GM12878 (cell line): ENCODE measurements at regions of chr5 and their contacts with region 1.

Region 1: GRCh38 chr5:7251132-7251531 is 144.8 kb upstream of the ADCY2 start:
- DNase-seq: no peak
- ATAC-seq: no peak
- H3K4me3 ChIP-seq: no peak overlapping the region
- H3K27ac ChIP-seq: no peak overlapping the region
- H3K4me1 ChIP-seq: no peaks in the 10 kb centered on the region
- H3K27me3 ChIP-seq: no peaks in the 10 kb centered on the region
- CTCF ChIP-seq: no peak
- EP300 ChIP-seq: no peak
- POLR2A ChIP-seq: no peak
- RAD21 ChIP-seq: no peak

Region 2: GRCh38 chr5:7117961-7118360 is 133.2 kb before region 1 on chr5:
- CTCF ChIA-PET with region 1: no interaction called
- POLR2A ChIA-PET with region 1: no interaction called
- RAD21 ChIA-PET with region 1: no interaction called
- SMC1A ChIA-PET with region 1: no interaction called
- in situ Hi-C with region 1: no loop called
- intact Hi-C with region 1: no loop called
- DNase-seq: no peak
- ATAC-seq: no peak
- H3K4me3 ChIP-seq: no peak overlapping the region
- H3K27ac ChIP-seq: no peak overlapping the region
- H3K4me1 ChIP-seq: no peaks in the 10 kb centered on the region
- H3K27me3 ChIP-seq: no peaks in the 10 kb centered on the region
- CTCF ChIP-seq: no peak
- EP300 ChIP-seq: no peak
- POLR2A ChIP-seq: no peak
- RAD21 ChIP-seq: no peak

Region 3: GRCh38 chr5:7157083-7157482 is 94.0 kb before region 1 on chr5:
- CTCF ChIA-PET with region 1: no interaction called
- POLR2A ChIA-PET with region 1: no interaction called
- RAD21 ChIA-PET with region 1: no interaction called
- SMC1A ChIA-PET with region 1: no interaction called
- in situ Hi-C with region 1: no loop called
- intact Hi-C with region 1: no loop called
- DNase-seq: no peak
- ATAC-seq: no peak
- H3K4me3 ChIP-seq: no peak overlapping the region
- H3K27ac ChIP-seq: no peak overlapping the region
- H3K4me1 ChIP-seq: no peaks in the 10 kb centered on the region
- H3K27me3 ChIP-seq: no peaks in the 10 kb centered on the region
- CTCF ChIP-seq: no peak
- EP300 ChIP-seq: no peak
- POLR2A ChIP-seq: no peak
- RAD21 ChIP-seq: no peak

Region 4: DNA sequence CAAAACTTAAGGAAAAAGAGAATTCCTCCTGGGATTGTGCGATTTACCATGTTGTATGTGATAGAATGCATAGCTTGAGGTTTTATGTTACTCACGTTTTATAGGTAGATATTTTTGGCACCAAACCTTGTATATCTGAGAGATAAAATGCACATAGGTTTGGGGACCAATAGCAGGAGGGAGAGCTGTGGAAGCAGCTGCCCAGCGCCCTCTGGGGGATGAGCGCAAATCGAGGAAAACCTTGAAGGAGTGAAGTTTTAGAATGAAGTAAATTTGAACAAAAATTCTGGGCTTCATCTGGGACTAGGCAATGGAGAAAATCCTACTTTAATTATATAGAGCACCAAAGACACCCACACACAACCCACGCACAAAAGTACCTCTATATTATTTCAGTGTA is 341.8 kb after region 1 on chr5:
- CTCF ChIA-PET with region 1: no interaction called
- POLR2A ChIA-PET with region 1: no interaction called
- RAD21 ChIA-PET with region 1: no interaction called
- SMC1A ChIA-PET with region 1: no interaction called
- in situ Hi-C with region 1: no loop called
- intact Hi-C with region 1: loop called (anchors 10 kb)
- DNase-seq: no peak
- ATAC-seq: peak; percentile 38; the same call in 1 of the 3 replicates
- H3K4me3 ChIP-seq: no peak overlapping the region
- H3K27ac ChIP-seq: no peak overlapping the region
- H3K4me1 ChIP-seq: no peaks in the 10 kb centered on the region
- H3K27me3 ChIP-seq: no peaks in the 10 kb centered on the region
- CTCF ChIP-seq: peak in 2 of 3 experiments; percentile 38 to 41; a peak in 3 of 6 replicates
- EP300 ChIP-seq: no peak
- POLR2A ChIP-seq: no peak
- RAD21 ChIP-seq: 0 out of 2 replicates have a peak, but pooled peaks have one; percentile 21

Region 5: GRCh38 chr5:7827610-7828009 is 576.5 kb after region 1 on chr5:
- CTCF ChIA-PET with region 1: no interaction called
- POLR2A ChIA-PET with region 1: no interaction called
- RAD21 ChIA-PET with region 1: no interaction called
- SMC1A ChIA-PET with region 1: no interaction called
- in situ Hi-C with region 1: no loop called
- intact Hi-C with region 1: no loop called
- DNase-seq: no peak
- ATAC-seq: no peak
- H3K4me3 ChIP-seq: no peak overlapping the region
- H3K27ac ChIP-seq: no peak overlapping the region
- H3K4me1 ChIP-seq: no peaks in the 10 kb centered on the region
- H3K27me3 ChIP-seq: peaks cover 0 to 1% of the 10 kb centered on the region in 2 experiments; a peak in 2 of 4 replicates
- CTCF ChIP-seq: no peak
- EP300 ChIP-seq: no peak
- POLR2A ChIP-seq: no peak
- RAD21 ChIP-seq: no peak